Left colon (tissue), 2 donors: ENCODE measurements at regions of chr22 and their contacts with region 1.

Region 1: GRCh38 chr22:30079952-30080533 is at the start of gene HORMAD2:
- DNase-seq: peak in 1 of 2 donors; percentile 24
- ATAC-seq: peak; percentile 15
- total RNA-seq, gene HORMAD2: not detected

Region 2: DNA sequence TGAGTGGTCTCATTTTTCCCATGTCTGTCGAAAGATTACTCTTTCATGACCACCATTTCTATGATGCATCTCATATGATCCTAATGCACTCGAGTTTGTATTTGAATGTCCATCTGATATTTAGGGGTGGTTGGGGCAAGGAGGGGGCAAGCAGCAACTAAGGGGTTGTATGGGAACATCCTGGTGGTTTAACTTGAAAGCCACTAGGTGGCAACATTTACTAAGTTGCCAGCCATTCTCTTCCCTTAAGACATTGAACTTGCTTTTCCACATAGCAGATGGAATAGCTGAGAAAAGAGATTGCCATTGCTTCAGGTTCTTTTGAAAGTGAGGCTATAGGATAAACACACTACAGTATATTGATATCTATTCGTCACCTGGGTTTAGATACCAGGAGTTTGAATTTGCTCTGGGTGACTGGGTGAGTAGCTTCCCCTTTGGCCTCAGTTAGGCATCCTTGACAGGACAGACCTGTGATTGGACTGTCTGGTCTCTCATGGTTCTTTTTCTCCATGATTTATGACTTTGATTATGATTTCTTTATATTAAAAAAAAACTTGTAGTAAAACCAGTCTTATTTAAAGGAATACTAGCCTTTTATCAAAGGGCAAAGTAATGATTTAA is 444.2 kb before region 1 on chr22:
- intact Hi-C with region 1: loop called in 1 of 2 experiments (anchors 10 kb)
- DNase-seq: no peak
- ATAC-seq: peak; percentile 79

Region 3: GRCh38 chr22:29689880-29690213 is 390.2 kb before region 1 on chr22:
- intact Hi-C with region 1: loop called in 1 of 2 experiments (anchors 10 kb)
- DNase-seq: peak in 1 of 2 donors; percentile 69
- ATAC-seq: peak; percentile 87